ENCODE measurements at regions of chr4 and their contacts with region 1.

Region 1: DNA sequence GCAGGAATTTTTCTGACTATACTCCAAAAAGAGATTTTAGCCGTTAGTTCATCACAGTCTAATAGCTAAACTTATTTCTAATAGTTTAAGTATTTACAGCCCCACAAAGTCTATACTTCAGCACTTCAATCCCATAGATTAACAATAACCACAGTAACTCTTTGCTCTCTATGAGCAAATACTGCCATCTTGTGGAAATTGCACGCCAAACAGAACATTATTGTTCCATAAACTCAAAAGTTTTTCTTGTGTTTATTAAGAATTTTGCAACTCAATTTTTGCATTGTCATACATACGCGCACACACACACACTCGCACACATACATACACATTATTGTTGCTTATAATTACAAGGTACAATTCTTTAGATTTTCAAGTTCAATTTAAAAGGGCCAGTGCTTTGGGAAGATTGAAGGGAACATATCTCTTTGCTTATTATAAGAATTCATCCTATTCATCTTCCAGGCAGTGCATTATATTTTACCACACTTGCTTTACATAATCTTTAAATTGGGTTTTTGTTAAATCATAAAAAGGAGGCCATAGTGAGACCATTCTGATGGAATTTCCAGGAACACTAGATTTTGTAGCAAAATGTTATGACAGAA is 63.8 kb upstream of the ATOH1 start:
- DNase-seq: peak in 1 of 2 experiments; percentile 29
- H3K4me3 ChIP-seq: no peak overlapping the region
- H3K4me3 Mint-ChIP-seq: no peak overlapping the region
- H3K27ac Mint-ChIP-seq: no peak overlapping the region
- H3K4me1 ChIP-seq: no peaks in the 10 kb centered on the region
- H3K4me1 Mint-ChIP-seq: no peaks in the 10 kb centered on the region
- H3K27me3 ChIP-seq: no peaks in the 10 kb centered on the region
- H3K27me3 Mint-ChIP-seq: peaks cover 15% of the 10 kb centered on the region
- CTCF ChIP-seq: peak; percentile 56 to 69

Region 2: DNA sequence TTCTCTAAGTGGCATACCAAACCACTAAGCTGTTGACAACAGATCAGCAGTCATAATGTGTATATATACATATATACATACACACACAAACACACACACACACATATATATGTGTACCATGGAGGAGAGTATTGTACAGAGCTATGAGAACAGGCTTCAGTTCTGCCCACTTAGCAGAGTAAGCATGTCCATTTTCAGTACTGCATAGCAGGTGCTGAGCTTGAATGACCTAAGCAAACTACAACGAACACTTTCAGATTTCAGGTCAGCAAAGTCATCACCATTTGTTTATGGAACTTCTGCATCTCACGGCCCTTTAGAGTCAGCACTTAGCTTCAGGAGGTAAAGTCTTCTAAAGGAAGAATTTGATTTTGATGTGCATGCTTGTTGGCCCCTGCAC is 672.0 kb before region 1 on chr4:
- CTCF ChIA-PET with region 1: no interaction called
- POLR2A ChIA-PET with region 1: no interaction called
- intact Hi-C with region 1: no loop called
- DNase-seq: no peak
- H3K4me3 ChIP-seq: no peak overlapping the region
- H3K4me3 Mint-ChIP-seq: no peak overlapping the region
- H3K27ac Mint-ChIP-seq: no peak overlapping the region
- H3K4me1 ChIP-seq: no peaks in the 10 kb centered on the region
- H3K4me1 Mint-ChIP-seq: no peaks in the 10 kb centered on the region
- H3K27me3 ChIP-seq: no peaks in the 10 kb centered on the region
- H3K27me3 Mint-ChIP-seq: no peaks in the 10 kb centered on the region
- CTCF ChIP-seq: no peak

Region 3: DNA sequence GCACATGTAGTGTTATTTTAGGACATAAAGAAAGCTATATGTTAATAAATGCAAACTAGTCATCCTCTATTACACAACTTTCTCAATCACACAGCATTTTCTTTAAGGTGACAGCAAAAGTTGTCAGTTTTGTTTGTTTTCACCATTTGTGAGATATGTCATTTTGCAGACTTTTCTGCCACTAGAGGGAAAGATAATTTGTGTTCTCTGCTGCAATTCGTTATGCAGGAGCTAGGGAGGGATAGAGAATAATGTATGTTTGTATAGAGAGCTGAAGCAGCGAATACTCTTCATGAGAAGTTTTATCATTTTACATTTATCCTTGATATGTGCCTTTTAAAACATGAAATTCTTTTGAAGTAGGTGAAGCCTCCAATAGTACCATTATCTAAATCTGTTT is 606.7 kb before region 1 on chr4:
- CTCF ChIA-PET with region 1: no interaction called
- POLR2A ChIA-PET with region 1: interaction called, 3 read pairs
- intact Hi-C with region 1: loop called (anchors 5 kb)
- DNase-seq: no peak
- H3K4me3 ChIP-seq: no peak overlapping the region
- H3K4me3 Mint-ChIP-seq: no peak overlapping the region
- H3K27ac Mint-ChIP-seq: no peak overlapping the region
- H3K4me1 ChIP-seq: no peaks in the 10 kb centered on the region
- H3K4me1 Mint-ChIP-seq: no peaks in the 10 kb centered on the region
- H3K27me3 ChIP-seq: no peaks in the 10 kb centered on the region
- H3K27me3 Mint-ChIP-seq: no peaks in the 10 kb centered on the region
- CTCF ChIP-seq: peak; percentile 36 to 42

Region 4: GRCh38 chr4:93710101-93710846 is 54.5 kb before region 1 on chr4:
- CTCF ChIA-PET with region 1: no interaction called
- POLR2A ChIA-PET with region 1: no interaction called
- intact Hi-C with region 1: loop called (anchors 1 kb)
- DNase-seq: peak; percentile 32 to 41
- H3K4me3 ChIP-seq: no peak overlapping the region
- H3K4me3 Mint-ChIP-seq: no peak overlapping the region
- H3K27ac Mint-ChIP-seq: no peak overlapping the region
- H3K4me1 ChIP-seq: no peaks in the 10 kb centered on the region
- H3K4me1 Mint-ChIP-seq: no peaks in the 10 kb centered on the region
- H3K27me3 ChIP-seq: no peaks in the 10 kb centered on the region
- H3K27me3 Mint-ChIP-seq: peaks cover 7% of the 10 kb centered on the region
- CTCF ChIP-seq: peak; percentile 16 to 46

Measured in Caco-2 (cell line).